A549 (cell line): ENCODE measurements at regions of chr17 and their contacts with region 1.

Region 1: DNA sequence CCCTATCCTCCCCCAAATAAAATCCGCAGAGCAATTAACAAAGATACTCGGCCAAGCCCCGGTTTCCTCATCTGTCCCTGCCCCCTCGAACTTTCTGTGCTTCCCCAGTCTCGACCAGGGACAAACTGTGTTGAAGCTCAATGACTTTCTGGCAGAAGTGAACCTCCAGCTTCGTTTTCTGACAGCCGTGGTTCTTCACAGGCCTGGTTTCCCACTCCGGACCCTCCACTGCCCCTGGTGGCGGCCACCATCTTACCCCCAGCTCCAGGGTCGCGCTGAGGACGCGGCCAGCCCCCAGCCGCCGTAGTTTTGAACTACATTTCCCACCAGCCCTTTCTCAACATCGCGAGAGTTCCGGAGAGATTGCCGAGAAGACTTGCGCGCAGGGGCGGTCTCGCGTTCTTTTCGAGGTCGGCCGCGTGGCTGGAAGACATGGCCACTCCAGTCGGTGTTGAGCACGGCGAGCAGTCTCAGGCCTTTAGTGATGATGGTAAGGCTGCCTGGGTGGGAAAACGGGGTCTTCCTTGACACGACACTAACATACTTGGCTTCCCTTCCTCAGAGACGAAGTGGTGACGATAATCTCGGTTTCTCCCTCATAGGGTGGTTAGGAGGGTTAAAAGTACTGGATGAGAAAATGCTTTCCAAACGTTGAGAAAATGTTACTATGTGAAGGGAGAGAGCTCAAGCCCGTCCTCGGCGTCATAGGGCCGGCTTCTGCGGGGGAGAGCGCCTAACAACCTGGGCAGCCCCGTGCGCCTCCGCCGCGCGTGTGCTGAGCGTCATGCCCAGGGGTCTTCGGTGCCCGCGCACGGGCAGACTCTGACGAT is 17.7 kb downstream of the PRCD start:
- DNase-seq: peak; percentile 84 to 99
- ATAC-seq: peak; percentile 96
- H3K4me3 ChIP-seq: peak overlapping the region; percentile 87
- H3K27ac ChIP-seq: peak overlapping the region; percentile 90 to 96
- H3K4me1 ChIP-seq: peaks cover 39% of the 10 kb centered on the region
- CTCF ChIP-seq: peak; percentile 54
- EP300 ChIP-seq: no peak
- POLR2A ChIP-seq: peak; percentile 99
- RAD21 ChIP-seq: no peak; a peak in 1 of 5 replicates

Region 2: DNA sequence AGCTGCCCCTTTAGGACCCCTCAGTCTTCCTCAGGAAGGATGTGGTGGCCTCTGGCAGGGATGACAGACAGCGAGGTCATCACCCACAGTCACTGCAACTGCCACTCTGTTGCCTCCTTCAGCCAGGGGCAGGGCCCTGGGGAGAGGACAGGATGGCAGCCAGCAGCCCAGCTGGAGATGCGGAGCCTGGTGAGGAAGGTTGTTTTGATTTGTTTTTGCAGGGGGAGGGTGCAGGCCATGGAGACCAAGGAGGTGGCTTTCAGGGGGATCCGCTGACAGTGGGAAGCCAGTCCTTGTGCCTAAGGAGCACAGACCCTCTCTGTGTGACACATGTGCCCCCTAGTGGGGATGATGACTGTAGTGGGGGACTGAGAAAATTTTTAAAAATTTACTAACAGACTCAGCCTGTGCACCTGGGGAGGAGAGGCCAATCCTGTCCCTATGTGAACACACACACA is 10.4 kb before region 1 on chr17:
- CTCF ChIA-PET with region 1: interaction called, 69 read pairs
- POLR2A ChIA-PET with region 1: interaction called, 11 read pairs
- DNase-seq: peak; percentile 72 to 74
- ATAC-seq: peak; percentile 66 to 89
- H3K4me3 ChIP-seq: no peak overlapping the region
- H3K27ac ChIP-seq: peak overlapping the region in 1 of 2 experiments; percentile 49; a peak in 4 of 6 replicates
- H3K4me1 ChIP-seq: peaks cover 36% of the 10 kb centered on the region
- CTCF ChIP-seq: peak; percentile 80
- EP300 ChIP-seq: no peak
- POLR2A ChIP-seq: no peak
- RAD21 ChIP-seq: peak; percentile 86 to 95

Region 3: GRCh38 chr17:76578344-76578979 is 20.9 kb after region 1 on chr17:
- CTCF ChIA-PET with region 1: interaction called, 13 read pairs
- POLR2A ChIA-PET with region 1: no interaction called
- DNase-seq: no peak
- ATAC-seq: peak in 1 of 2 experiments; percentile 32; a peak in 1 of 6 replicates
- H3K4me3 ChIP-seq: no peak overlapping the region
- H3K27ac ChIP-seq: no peak overlapping the region
- H3K4me1 ChIP-seq: no peaks in the 10 kb centered on the region
- CTCF ChIP-seq: no peak
- EP300 ChIP-seq: no peak
- POLR2A ChIP-seq: no peak
- RAD21 ChIP-seq: no peak

Region 4: DNA sequence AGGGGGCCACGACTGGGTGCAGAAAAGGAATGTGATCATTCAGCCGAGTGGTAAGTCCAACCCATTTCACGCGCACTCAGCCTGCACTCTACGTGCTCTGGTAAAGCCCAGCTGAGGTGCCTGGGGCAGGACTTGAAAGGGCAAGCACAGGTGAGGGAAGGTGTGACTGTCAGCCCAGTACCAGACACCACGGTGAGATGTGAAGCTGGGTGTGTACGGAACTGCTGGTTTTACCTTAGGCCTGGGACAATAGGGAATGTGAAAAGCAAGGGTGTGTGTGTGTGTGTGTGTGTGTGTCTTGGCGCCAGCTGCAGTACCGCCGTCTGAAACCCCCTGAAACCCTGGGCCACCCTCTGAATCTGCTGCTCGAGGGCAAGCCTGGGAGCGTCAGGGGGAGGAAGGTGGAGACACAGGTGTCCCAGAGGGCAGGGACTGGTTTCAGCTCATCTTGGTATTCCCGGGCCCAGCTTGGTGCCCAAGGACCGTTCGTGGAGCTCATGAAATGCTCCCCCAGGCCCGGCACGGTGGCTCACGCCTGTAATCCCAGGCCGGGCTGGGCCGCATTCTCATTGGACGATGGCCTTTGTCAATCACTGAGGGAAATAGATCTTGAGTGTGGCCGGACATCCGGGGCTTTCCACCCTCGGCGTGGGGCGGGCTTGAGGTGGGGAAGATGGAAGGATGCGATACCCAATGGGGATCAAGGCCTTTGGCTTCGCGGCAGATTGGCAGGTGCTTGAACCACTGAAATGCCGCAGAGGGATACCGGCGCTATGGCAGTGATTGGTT is 113.7 kb after region 1 on chr17:
- CTCF ChIA-PET with region 1: interaction called, 4 read pairs
- POLR2A ChIA-PET with region 1: interaction called, 11 read pairs
- DNase-seq: peak; percentile 100
- ATAC-seq: peak; percentile 97 to 99
- H3K4me3 ChIP-seq: peak overlapping the region; percentile 54
- H3K27ac ChIP-seq: peak overlapping the region; percentile 85 to 91
- H3K4me1 ChIP-seq: peaks cover 15% of the 10 kb centered on the region
- CTCF ChIP-seq: no peak
- EP300 ChIP-seq: no peak
- POLR2A ChIP-seq: peak; percentile 66
- RAD21 ChIP-seq: no peak

Region 5: DNA sequence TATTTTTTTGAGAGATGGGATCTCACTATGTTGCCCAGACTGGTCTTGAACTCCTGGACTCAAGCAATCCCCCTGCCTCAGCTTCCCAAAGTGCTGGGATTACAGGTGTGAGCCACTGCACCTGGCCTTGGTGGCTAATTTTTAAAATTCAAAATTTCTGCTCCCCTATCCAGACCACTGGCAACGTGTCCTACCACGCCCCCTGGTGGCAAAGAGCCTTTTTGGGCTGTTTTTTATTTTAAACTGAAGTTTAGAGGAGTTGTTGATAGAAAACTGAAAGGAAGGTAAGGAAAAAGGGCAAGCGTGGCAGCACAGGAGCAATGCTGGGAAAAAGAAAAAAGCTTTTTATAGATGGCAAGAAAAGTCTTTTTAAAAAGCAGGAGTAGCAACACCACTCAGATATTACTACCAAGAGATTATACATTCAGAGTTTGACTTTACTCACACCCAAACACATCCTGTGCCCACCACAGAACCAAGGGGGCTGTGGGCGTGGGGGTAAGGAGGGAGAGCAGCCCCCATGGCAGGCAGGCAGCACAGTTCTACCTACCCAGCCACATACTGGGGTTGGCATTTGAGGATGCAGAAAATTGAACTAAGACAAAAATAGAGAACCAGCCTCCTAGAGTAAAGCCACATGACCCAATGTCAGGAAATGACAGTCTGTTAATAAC is 157.4 kb after region 1 on chr17:
- CTCF ChIA-PET with region 1: interaction called, 78 read pairs
- POLR2A ChIA-PET with region 1: interaction called, 4 read pairs
- DNase-seq: peak in 1 of 2 experiments; percentile 57
- ATAC-seq: peak in 1 of 2 experiments; percentile 48; a peak in 3 of 6 replicates
- H3K4me3 ChIP-seq: no peak overlapping the region
- H3K27ac ChIP-seq: no peak overlapping the region
- H3K4me1 ChIP-seq: peaks cover 12% of the 10 kb centered on the region
- CTCF ChIP-seq: peak; percentile 97
- EP300 ChIP-seq: no peak
- POLR2A ChIP-seq: no peak
- RAD21 ChIP-seq: peak; percentile 77